ENCODE measurements at regions of chr12 and their contacts with region 1.

Region 1: GRCh38 chr12:113208041-113208934 is 13.0 kb upstream of the TPCN1 start:
- DNase-seq: peak; percentile 18 to 72 (median 62)
- ATAC-seq: peak; percentile 89
- H3K4me3 ChIP-seq: no peak overlapping the region
- H3K4me3 Mint-ChIP-seq: peak overlapping the region; percentile 59 to 86 (median 77)
- H3K27ac ChIP-seq: peak overlapping the region; percentile 64
- H3K27ac Mint-ChIP-seq: peak overlapping the region; percentile 82 to 97 (median 90)
- H3K4me1 ChIP-seq: peaks cover 38 to 45% of the 10 kb centered on the region in 2 donors
- H3K4me1 Mint-ChIP-seq: peaks cover 28 to 62% (median 51%) of the 10 kb centered on the region in 7 donors
- H3K27me3 ChIP-seq: no peaks in the 10 kb centered on the region
- H3K27me3 Mint-ChIP-seq: no peaks in the 10 kb centered on the region

Region 2: DNA sequence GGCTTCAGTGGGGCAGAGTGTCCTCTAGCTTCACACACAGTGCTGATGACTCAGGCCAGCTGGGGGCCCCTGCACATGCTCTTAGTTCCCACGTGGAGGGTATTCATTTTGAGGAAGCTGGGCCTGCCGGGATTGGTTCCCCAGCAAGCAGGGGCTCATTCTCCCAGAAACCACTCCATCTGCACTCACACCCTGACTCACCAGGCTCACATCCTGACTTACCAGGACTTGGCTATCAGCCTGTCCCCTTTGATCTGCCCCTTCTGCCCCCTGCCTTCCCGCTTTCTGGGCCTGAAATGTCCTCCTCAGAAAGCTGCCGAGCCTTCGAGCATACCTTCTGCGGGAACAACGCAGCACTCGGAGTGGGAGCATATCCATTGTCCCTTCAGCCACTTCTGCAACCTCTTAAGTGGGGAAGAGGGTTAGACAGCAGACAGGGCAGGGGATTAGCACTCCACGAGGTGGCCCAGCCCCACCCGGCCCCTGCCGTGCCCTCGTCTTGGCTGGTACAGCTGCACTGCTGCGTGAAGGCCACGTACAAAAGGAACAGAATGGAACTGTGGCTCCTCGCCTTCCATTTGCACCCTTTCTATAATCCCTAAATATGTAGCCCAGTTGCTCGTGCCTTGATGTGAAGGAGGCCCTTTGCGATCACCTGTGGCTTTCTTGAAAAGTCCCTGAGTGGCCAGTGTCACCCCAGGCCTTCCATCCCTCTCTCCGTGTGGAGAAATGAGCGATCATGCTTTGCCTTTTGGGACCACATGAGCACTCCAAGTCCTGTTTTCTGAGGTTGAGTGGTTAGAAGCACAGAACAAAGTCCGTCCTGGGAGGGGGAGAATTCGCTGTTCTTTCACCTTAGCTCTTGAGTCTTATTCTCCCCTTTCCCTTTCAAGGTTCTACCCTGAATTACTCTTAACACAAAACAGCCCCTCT is 39.1 kb after region 1 on chr12:
- CTCF ChIA-PET with region 1: no interaction called
- POLR2A ChIA-PET with region 1: no interaction called
- intact Hi-C with region 1: no loop called
- DNase-seq: no peak
- ATAC-seq: no peak
- H3K4me3 ChIP-seq: no peak overlapping the region
- H3K4me3 Mint-ChIP-seq: no peak overlapping the region
- H3K27ac ChIP-seq: no peak overlapping the region
- H3K27ac Mint-ChIP-seq: no peak overlapping the region
- H3K4me1 ChIP-seq: no peaks in the 10 kb centered on the region
- H3K4me1 Mint-ChIP-seq: peaks cover 16 to 32% (median 25%) of the 10 kb centered on the region in 7 donors
- H3K27me3 ChIP-seq: no peaks in the 10 kb centered on the region
- H3K27me3 Mint-ChIP-seq: no peaks in the 10 kb centered on the region

Region 3: DNA sequence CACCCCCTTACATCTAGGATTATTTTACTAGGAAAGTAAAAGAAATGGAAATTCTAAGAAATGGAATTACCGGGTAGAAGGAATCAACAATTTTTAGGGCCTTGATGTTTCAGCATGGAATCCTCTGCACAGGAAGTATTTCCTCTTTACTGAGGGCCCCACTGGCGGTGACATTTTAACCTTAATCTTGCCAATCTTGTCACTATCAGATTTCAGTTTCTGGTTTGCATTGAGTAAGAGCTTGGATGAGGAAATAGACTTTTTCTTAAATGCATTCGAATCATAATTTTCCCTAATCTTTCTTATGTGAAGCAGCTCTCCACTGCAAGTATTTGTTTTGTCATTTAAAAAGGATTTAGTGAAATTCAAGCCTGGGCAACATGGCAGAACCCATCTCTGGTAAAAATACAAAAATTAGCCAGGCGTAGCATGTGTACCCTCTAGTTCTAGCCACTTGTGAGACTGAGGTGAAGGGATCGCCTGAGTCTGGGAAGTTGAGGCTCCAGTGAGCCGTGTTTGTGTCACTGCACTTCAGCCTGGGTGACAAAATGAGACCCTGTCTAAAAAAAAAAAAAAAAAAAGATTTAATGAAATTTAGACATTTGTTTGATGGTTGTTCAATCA is 53.7 kb after region 1 on chr12:
- CTCF ChIA-PET with region 1: interaction called, 4 read pairs
- POLR2A ChIA-PET with region 1: interaction called, 3 read pairs
- intact Hi-C with region 1: loop called in 1 of 2 experiments (anchors 5 kb)
- DNase-seq: peak in 8 of 9 donors; percentile 25 to 63 (median 52)
- ATAC-seq: peak; percentile 72
- H3K4me3 ChIP-seq: peak overlapping the region; percentile 37
- H3K4me3 Mint-ChIP-seq: peak overlapping the region; percentile 55 to 88 (median 76)
- H3K27ac ChIP-seq: peak overlapping the region; percentile 58
- H3K27ac Mint-ChIP-seq: peak overlapping the region; percentile 77 to 95 (median 91)
- H3K4me1 ChIP-seq: peaks cover 14 to 53% of the 10 kb centered on the region in 2 donors
- H3K4me1 Mint-ChIP-seq: peaks cover 27 to 76% (median 55%) of the 10 kb centered on the region in 7 donors
- H3K27me3 ChIP-seq: no peaks in the 10 kb centered on the region
- H3K27me3 Mint-ChIP-seq: no peaks in the 10 kb centered on the region

Region 4: DNA sequence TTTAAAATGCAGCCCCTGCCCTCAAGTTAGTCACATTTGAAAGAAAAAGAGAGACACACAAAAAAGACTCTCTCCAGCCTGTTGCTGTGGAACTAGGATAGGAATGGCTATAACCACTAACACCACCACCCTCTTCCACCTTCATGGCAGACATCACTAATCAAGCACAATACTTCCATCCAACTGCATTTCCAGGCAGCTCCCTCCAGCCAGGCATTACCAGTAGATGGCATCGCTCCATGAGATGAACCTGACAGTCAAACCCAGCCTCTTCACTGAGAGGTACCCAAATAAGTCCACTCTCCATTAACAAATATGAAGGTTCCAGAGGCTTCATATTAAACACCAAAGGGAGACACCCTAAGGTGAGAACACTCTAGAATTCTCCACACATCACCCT is 102.2 kb after region 1 on chr12:
- CTCF ChIA-PET with region 1: no interaction called
- POLR2A ChIA-PET with region 1: no interaction called
- intact Hi-C with region 1: no loop called
- DNase-seq: no peak
- ATAC-seq: no peak
- H3K4me3 ChIP-seq: no peak overlapping the region
- H3K4me3 Mint-ChIP-seq: no peak overlapping the region
- H3K27ac ChIP-seq: no peak overlapping the region
- H3K27ac Mint-ChIP-seq: peak overlapping the region in 3 of 9 donors; percentile 36 to 59 (median 43)
- H3K4me1 ChIP-seq: no peaks in the 10 kb centered on the region
- H3K4me1 Mint-ChIP-seq: peaks cover 0 to 4% (median 0%) of the 10 kb centered on the region in 7 donors
- H3K27me3 ChIP-seq: no peaks in the 10 kb centered on the region
- H3K27me3 Mint-ChIP-seq: no peaks in the 10 kb centered on the region